Heart right ventricle (tissue), 16 donors: ENCODE measurements at regions of chr2 and their contacts with region 1.

Region 1: GRCh38 chr2:222734703-222735014 is 63.2 kb downstream of the MOGAT1 start:
- DNase-seq: no peak
- ATAC-seq: no peak
- H3K4me3 ChIP-seq: no peak overlapping the region
- H3K27ac ChIP-seq: peak overlapping the region in 5 of 10 donors; percentile 44 to 71 (median 56)
- H3K4me1 ChIP-seq: peaks cover 0 to 47% (median 19%) of the 10 kb centered on the region in 9 donors
- H3K27me3 ChIP-seq: no peaks in the 10 kb centered on the region
- CTCF ChIP-seq: no peak

Region 2: GRCh38 chr2:222208010-222208690 is 526.5 kb before region 1 on chr2:
- intact Hi-C with region 1: no loop called
- DNase-seq: no peak
- ATAC-seq: no peak
- H3K4me3 ChIP-seq: no peak overlapping the region
- H3K27ac ChIP-seq: no peak overlapping the region
- H3K4me1 ChIP-seq: no peaks in the 10 kb centered on the region
- H3K27me3 ChIP-seq: peaks cover 0 to 66% (median 14%) of the 10 kb centered on the region in 7 donors
- CTCF ChIP-seq: no peak

Region 3: DNA sequence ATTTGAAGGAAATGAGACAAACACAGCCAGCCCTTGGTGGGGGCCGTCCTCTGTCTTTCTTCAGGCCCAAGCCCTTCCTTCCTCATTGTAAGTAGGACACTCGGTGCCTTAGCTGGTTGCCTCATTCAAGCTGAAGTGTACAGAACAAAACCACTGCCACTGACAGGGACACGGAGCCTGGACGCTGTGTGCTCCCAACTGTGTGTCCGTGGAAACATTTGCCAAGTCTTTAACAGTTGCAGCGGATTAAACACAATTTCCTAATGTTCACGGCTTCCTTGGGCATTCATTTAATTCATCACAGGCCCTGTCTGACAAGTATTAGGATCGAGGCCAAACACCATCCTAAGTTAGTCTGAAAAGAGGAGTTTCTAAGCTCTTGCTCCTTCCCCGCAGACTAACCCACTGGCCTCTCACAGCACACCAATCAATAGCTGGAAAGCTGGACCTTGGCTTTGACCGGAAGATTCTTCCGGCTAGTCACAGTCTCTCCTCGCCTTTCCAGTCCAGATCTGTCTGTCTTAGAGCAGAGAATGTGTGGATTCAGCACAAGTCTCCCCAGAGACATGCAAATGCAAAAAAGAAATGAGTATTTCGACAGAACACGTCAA is 57.4 kb after region 1 on chr2:
- intact Hi-C with region 1: loop called in 1 of 10 experiments (anchors 5 kb)
- DNase-seq: peak; percentile 37 to 62
- ATAC-seq: peak; percentile 78 to 96 (median 88)
- H3K4me3 ChIP-seq: peak overlapping the region in 1 of 10 donors; percentile 11
- H3K27ac ChIP-seq: peak overlapping the region; percentile 68 to 90 (median 78)
- H3K4me1 ChIP-seq: peaks cover 4 to 69% (median 55%) of the 10 kb centered on the region in 9 donors
- H3K27me3 ChIP-seq: no peaks in the 10 kb centered on the region
- CTCF ChIP-seq: no peak